ENCODE measurements at regions of chr12 and their contacts with region 1.

Region 1: GRCh38 chr12:108193917-108194316 is 64.8 kb downstream of the WSCD2 start:
- DNase-seq: no peak

Region 2: DNA sequence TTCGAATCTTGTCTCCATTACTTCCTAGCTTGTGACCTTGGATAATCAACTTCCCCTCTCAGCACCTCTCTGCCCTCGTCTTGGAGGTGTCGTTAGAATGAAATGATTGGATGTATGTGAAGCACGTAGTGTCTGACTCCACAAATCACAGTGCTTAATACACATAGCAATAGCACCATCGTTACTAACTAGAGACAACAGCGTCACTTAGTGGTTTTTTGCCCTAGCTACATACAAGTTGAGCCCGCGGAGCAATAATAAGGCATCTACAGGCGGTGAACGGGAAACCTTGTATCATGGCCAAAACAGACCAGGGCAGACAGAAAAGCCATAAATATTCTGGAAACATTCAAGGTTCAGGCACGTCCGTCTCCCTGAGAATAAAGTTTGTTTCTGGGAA is 264.5 kb before region 1 on chr12:
- intact Hi-C with region 1: no loop called
- DNase-seq: no peak

Region 3: GRCh38 chr12:107992870-107993451 is 201.0 kb before region 1 on chr12:
- intact Hi-C with region 1: loop called (anchors 5 kb)
- DNase-seq: no peak